ENCODE measurements at regions of chr12 and their contacts with region 1.

Region 1: GRCh38 chr12:120469450-120470149 is at the start of gene SRSF9:
- DNase-seq: peak; percentile 97
- ATAC-seq: peak; percentile 96
- H3K4me3 Mint-ChIP-seq: peak within 1 kb of the TSS; percentile 96
- H3K27ac Mint-ChIP-seq: peak within 1 kb of the TSS; percentile 87
- H3K4me1 Mint-ChIP-seq: peaks cover 40% of the 10 kb centered on the region
- H3K27me3 Mint-ChIP-seq: no peaks in the 10 kb centered on the region
- total RNA-seq, gene SRSF9: 199 to 219 TPM

Region 2: GRCh38 chr12:120406069-120406468 is 63.5 kb before region 1 on chr12:
- CTCF ChIA-PET with region 1: no interaction called
- POLR2A ChIA-PET with region 1: no interaction called
- DNase-seq: no peak
- ATAC-seq: no peak
- H3K4me3 Mint-ChIP-seq: no peak overlapping the region
- H3K27ac Mint-ChIP-seq: no peak overlapping the region
- H3K4me1 Mint-ChIP-seq: peaks cover 2% of the 10 kb centered on the region
- H3K27me3 Mint-ChIP-seq: no peaks in the 10 kb centered on the region

Region 3: DNA sequence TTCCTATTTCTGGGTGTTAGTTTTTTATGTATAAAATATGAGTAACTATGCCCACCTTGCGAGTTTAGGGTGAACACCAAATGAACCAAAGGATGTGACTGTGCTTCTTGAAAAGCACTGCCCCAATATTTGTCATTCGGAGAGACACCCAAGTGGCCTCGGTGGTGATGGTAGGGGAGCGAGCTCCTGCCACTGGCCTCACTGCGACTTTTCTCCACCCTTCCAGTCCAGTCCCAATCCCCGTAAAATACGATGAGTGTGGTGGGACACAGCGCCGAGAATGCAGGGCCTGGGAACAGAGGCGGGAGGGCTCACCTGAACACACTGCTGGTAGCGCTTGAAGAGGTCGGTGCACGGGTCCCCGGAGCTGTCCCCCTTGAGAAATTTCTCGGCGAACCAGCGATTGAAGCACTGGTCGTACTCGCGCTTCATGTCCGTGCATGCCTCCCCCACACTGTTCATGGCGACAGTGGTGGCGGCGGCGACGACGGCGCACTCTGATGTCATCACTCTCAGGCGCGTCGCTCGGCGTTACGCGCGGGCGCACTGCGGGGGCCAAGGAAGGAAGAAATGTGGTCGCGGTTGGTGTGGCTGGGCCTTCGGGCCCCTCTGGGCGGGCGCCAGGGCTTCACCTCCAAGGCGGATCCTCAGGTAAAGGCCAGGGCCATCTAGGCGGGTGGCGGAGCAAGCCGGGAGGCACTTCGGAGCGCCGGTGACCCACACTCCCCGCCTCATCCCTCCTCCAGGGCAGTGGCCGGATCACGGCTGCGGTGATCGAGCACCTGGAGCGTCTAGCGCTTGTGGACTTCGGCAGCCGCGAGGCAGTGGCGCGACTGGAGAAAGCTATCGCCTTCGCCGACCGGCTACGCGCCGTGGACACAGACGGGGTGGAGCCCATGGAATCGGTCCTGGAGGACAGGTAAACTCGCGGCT is 23.4 kb before region 1 on chr12 and contains the starts of genes GATC and TRIAP1:
- CTCF ChIA-PET with region 1: interaction called, 27 read pairs
- POLR2A ChIA-PET with region 1: interaction called, 6 read pairs
- DNase-seq: peak; percentile 92
- ATAC-seq: peak; percentile 96
- H3K4me3 Mint-ChIP-seq: peak within 1 kb of the TSS; percentile 97
- H3K27ac Mint-ChIP-seq: peak within 1 kb of the TSS; percentile 99
- H3K4me1 Mint-ChIP-seq: peaks cover 41% of the 10 kb centered on the region
- H3K27me3 Mint-ChIP-seq: no peaks in the 10 kb centered on the region
- total RNA-seq, gene GATC: 25.4 to 31.9 TPM
- total RNA-seq, gene TRIAP1: 36.2 to 40.9 TPM

Region 4: GRCh38 chr12:120495723-120496412 is 26.3 kb after region 1 on chr12 and contains the start of gene DYNLL1:
- CTCF ChIA-PET with region 1: interaction called, 21 read pairs
- POLR2A ChIA-PET with region 1: interaction called, 19 read pairs
- DNase-seq: peak; percentile 97
- ATAC-seq: peak; percentile 94
- H3K4me3 Mint-ChIP-seq: peak within 1 kb of the TSS; percentile 89
- H3K27ac Mint-ChIP-seq: peak within 1 kb of the TSS; percentile 85
- H3K4me1 Mint-ChIP-seq: peaks cover 35% of the 10 kb centered on the region
- H3K27me3 Mint-ChIP-seq: no peaks in the 10 kb centered on the region
- total RNA-seq, gene DYNLL1: 273 to 275 TPM

Region 5: GRCh38 chr12:120534203-120534702 is 64.7 kb after region 1 on chr12 and contains the start of gene RNF10:
- CTCF ChIA-PET with region 1: interaction called, 11 read pairs
- POLR2A ChIA-PET with region 1: interaction called, 6 read pairs
- DNase-seq: peak; percentile 83
- ATAC-seq: peak; percentile 75
- H3K4me3 Mint-ChIP-seq: peak within 1 kb of the TSS; percentile 88
- H3K27ac Mint-ChIP-seq: peak within 1 kb of the TSS; percentile 87
- H3K4me1 Mint-ChIP-seq: peaks cover 52% of the 10 kb centered on the region
- H3K27me3 Mint-ChIP-seq: no peaks in the 10 kb centered on the region
- total RNA-seq, gene RNF10: 192 to 204 TPM

Region 6: DNA sequence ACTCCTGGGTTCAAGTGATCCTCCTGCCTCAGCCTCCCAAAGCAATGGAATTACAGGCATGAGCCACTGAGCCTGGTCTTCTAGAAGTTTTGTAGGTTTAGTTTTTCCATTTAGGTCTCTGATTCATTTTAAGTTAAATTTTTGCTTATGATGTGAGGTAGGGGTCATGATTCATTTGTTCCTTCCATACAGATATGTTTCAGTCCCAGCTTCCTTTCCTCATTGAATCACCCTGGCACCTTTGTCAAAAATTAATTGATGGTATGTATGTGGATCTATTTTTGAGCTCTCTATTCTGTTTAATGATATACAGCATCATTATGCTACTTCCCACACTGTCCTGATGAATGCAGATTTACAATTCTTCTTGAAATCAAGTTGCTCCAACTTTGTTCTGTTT is 145.3 kb after region 1 on chr12:
- CTCF ChIA-PET with region 1: no interaction called
- POLR2A ChIA-PET with region 1: no interaction called
- DNase-seq: no peak
- ATAC-seq: no peak
- H3K4me3 Mint-ChIP-seq: no peak overlapping the region
- H3K27ac Mint-ChIP-seq: no peak overlapping the region
- H3K4me1 Mint-ChIP-seq: no peaks in the 10 kb centered on the region
- H3K27me3 Mint-ChIP-seq: peaks cover 20% of the 10 kb centered on the region

Measured in activated CD8-positive, alpha-beta T cell treated with anti-CD3 and anti-CD28 coated beads, Interleukin-2, amount 10 ng/mL, durations not matched to agents 7 days and 5 days (primary cell).